ENCODE measurements at regions of chr17 and their contacts with region 1.

Region 1: DNA sequence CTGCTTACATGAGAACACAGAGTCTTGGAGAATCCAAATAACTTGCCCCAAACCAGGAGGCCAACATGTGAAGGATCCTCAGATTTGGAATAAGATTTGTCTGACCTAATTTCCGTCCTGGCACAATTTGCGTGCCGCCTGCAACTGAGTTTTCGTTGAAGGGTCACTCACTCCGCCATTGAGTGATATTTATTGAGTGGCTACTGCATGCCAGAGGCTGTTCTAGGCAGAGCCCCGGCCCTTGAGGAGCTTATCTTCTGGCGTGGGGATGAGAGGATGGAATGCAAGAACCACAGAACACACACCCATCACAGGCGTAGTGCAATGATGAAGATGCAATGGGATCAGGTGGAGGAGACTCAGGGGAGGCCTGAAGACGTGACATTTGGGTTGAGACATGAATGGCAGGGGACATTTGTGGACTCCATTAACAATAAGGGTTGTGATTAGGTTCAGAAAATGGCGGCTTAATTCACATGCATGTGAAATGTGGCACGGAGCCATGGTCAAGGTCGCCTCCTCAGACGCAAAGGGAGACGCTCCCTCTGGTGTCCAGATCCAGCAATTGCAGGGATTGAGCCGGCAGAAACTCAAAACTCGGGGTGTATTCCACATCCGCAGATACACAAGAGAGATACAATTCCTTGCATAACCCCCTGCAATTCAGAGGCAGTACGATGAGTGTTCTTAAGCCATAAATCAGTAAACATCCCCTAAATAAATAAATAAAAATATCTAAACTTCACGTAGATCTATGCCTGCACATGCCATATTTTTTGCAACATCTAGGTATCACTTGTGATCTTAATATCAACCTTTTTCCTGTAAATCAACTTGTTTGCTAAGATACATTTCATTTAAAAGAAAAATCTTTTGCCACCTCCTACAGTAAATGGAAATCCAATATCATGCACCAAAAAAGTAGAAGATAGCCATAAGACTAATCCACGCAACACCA is 57.9 kb upstream of the CACNG4 start:
- DNase-seq: peak; percentile 45 to 80
- ATAC-seq: peak; percentile 55 to 83 (median 72)
- H3K4me3 ChIP-seq: no peak overlapping the region
- H3K4me3 Mint-ChIP-seq: no peak overlapping the region
- H3K27ac ChIP-seq: no peak overlapping the region
- H3K27ac Mint-ChIP-seq: no peak overlapping the region
- H3K4me1 ChIP-seq: no peaks in the 10 kb centered on the region
- H3K4me1 Mint-ChIP-seq: peaks cover 6 to 8% of the 10 kb centered on the region in 2 donors
- H3K27me3 ChIP-seq: no peaks in the 10 kb centered on the region
- H3K27me3 Mint-ChIP-seq: peaks cover 0 to 8% of the 10 kb centered on the region in 2 donors
- CTCF ChIP-seq: peak; percentile 86

Region 2: DNA sequence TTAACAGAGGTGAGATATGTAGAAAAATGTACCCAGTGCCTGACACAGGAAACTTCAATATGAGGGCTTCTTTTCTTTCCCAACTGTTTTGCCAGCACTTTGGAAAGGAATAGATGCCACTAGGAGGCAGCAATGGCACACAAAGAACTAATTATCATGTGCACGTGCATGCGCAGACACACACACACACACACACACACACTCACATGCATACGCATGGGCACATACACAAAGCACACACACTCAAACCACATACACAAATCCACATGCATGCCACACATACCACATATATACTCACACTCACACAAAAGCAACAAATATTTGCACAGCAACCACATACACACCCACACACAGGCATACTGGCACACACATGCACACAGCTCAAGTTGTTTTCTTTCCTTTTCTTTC is 705.9 kb before region 1 on chr17:
- intact Hi-C with region 1: loop called (anchors 5 kb)
- DNase-seq: peak in 1 of 2 donors; percentile 77
- ATAC-seq: peak; percentile 27 to 52 (median 29)
- H3K4me3 ChIP-seq: no peak overlapping the region
- H3K4me3 Mint-ChIP-seq: no peak overlapping the region
- H3K27ac ChIP-seq: no peak overlapping the region
- H3K27ac Mint-ChIP-seq: no peak overlapping the region
- H3K4me1 ChIP-seq: no peaks in the 10 kb centered on the region
- H3K4me1 Mint-ChIP-seq: peaks cover 0 to 5% of the 10 kb centered on the region in 2 donors
- H3K27me3 ChIP-seq: no peaks in the 10 kb centered on the region
- H3K27me3 Mint-ChIP-seq: no peaks in the 10 kb centered on the region
- CTCF ChIP-seq: peak; percentile 19

Region 3: GRCh38 chr17:66715745-66716156 is 190.8 kb before region 1 on chr17:
- intact Hi-C with region 1: loop called (anchors 1 kb)
- DNase-seq: peak in 1 of 2 donors; percentile 65
- ATAC-seq: peak in 1 of 3 donors; percentile 24
- H3K4me3 ChIP-seq: no peak overlapping the region
- H3K4me3 Mint-ChIP-seq: no peak overlapping the region
- H3K27ac ChIP-seq: no peak overlapping the region
- H3K27ac Mint-ChIP-seq: no peak overlapping the region
- H3K4me1 ChIP-seq: peaks cover 46% of the 10 kb centered on the region
- H3K4me1 Mint-ChIP-seq: peaks cover 35 to 43% of the 10 kb centered on the region in 2 donors
- H3K27me3 ChIP-seq: no peaks in the 10 kb centered on the region
- H3K27me3 Mint-ChIP-seq: no peaks in the 10 kb centered on the region
- CTCF ChIP-seq: peak; percentile 64